ENCODE measurements at regions of chr17 and their contacts with region 1.

Region 1: DNA sequence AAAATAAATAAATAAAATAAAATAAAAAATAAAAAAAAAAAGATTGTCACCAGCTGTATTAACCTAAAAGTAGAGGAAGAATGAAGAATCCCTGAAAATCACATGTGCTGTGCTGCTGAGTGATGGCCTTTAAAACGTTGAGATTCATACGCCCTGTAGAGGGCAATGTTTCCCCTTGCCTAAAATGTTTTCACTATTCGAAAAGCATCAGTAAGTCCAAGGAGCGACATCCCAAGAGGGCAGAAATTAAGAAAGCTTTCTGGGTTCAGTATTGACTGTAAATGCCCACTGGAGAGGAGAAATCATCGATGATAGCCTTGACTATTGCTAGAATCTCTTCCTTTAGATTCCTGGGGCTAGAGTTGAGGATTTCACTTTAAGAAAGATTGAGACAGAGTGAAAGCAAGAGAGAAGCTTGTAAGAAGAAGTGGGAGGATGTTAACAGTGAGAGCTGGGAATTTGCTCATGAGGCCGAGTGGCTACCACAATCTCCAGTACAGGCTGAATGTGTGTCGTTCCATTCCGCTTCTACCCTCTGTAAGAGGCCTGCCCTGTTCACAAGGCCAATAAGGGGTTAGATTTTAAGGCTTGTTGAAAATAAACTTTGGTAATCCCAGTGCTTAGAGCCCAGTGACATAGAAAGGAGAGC is 170.8 kb upstream of the FAM20A start:
- DNase-seq: peak; percentile 80
- H3K4me3 ChIP-seq: peak overlapping the region; percentile 21
- H3K27ac ChIP-seq: no peak overlapping the region
- H3K4me1 ChIP-seq: peaks cover 22% of the 10 kb centered on the region
- CTCF ChIP-seq: peak; percentile 90

Region 2: GRCh38 chr17:68576811-68577496 is 195.0 kb before region 1 on chr17:
- CTCF ChIA-PET with region 1: no interaction called
- POLR2A ChIA-PET with region 1: no interaction called
- intact Hi-C with region 1: no loop called
- DNase-seq: peak; percentile 9
- H3K4me3 ChIP-seq: no peak overlapping the region
- H3K27ac ChIP-seq: no peak overlapping the region
- H3K4me1 ChIP-seq: no peaks in the 10 kb centered on the region
- CTCF ChIP-seq: peak; percentile 57

Region 3: DNA sequence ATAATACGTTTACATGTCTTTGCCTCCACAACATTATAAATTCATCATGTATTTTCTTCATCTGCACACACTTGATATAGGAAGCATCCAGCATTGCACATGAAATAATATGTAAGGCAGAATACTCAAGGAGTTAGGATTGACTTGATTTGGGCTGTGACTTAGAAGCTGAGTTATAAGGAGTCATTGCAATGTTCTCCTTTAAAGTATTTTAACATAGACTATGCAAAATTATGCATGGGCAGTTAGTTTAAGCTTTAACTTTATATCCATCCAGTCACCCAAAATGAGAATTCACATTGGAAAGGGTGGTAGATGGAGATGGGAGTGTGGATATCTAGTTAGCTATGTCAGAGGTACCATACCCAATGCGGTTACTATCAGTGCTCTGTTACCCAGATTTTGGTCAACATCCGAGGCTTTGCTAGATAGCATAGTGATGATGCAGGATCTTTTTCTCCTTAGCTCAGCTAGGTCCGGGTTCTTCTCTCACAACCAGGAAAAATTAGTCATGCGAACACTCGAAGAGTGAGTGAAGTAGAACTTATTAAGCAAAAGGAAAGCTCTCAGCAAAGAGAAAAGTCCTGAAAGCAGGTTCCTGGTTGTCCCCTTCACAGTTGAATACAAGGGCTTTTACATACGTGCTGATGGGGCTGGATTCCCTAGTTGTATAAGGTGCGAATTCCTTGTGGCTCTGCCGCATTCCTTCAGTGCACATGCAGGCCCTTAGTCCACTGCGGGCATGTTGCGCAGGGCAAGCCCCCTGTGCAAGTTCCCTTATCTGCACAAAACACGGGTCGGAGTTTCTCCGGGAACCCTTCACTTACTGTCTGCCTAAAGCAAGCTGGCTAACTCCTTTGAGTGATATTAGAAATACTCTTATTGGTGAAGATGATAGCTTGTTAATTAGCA is 97.7 kb before region 1 on chr17:
- CTCF ChIA-PET with region 1: no interaction called
- POLR2A ChIA-PET with region 1: no interaction called
- intact Hi-C with region 1: no loop called
- DNase-seq: no peak
- H3K4me3 ChIP-seq: no peak overlapping the region
- H3K27ac ChIP-seq: no peak overlapping the region
- H3K4me1 ChIP-seq: no peaks in the 10 kb centered on the region
- CTCF ChIP-seq: no peak

Region 4: DNA sequence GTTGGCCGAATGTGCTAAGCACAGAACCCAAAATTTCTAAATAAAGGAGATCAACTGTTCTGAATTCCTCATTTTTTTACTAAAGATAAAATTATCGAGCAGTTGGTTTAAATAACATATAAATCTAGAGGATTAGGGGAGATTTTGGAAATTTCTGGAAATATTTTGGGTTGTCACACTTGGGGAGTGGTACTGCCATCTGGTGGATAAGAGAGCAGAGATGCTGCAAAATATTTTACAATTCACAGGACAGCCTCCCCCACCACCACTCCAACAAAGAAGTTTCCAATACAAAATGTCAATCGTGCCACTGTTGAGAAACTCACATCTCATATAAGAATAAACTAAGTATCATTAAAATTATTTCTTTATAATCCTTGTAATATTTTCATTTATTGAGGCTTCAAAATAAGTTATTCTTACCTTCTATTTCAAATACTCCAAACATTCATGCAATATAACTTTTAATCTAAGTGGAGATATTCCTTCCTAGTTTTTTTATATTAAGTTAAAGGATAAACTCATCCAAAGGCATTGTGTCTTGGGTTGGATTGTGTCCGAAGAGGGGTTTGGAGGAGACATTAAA is 200.2 kb after region 1 on chr17:
- CTCF ChIA-PET with region 1: no interaction called
- POLR2A ChIA-PET with region 1: no interaction called
- intact Hi-C with region 1: loop called (anchors 2 kb)
- DNase-seq: peak; percentile 33
- H3K4me3 ChIP-seq: no peak overlapping the region
- H3K27ac ChIP-seq: no peak overlapping the region
- H3K4me1 ChIP-seq: no peaks in the 10 kb centered on the region
- CTCF ChIP-seq: peak; percentile 90

Region 5: DNA sequence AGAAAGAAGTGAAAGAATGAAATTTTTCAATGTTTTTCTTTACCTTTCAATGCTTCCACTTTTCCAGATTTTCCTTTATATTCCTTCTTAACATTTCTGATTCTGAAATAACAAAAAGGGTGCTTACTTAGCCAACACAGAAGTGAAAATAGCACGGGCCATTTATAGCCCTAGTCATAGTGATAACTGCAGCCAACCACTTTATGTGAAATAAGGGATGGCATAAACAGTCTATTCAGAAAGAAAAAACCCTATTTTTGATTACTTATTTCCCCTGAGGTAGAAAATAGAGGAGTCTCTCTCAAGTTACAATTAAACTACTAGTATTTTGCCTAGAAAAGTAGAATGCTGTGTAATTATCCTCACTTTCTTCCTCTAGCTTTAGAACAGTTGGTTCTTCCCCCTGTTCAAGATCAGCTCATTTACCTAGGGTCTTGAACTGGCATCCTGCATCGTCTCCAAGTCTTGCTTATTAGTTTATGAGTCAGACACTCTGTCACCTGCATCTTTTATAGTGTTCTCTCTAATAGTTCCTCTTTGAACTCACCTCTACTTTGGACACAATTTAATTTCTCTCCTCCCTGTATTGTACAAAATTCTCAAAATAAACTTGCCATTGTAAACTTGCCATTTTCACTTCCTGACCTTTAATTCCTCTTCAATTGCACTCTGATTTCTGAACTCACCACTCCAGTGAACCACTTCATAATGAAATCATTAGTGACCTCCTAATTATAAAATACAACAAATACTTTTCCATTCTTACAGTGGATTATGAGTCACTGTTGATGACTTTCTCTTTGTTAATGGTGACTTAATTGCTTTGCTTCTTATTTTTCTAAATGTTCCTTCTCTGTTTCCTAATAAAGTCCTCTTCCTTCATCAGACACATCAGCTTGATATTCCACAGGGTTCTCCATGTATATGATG is 346.1 kb after region 1 on chr17:
- CTCF ChIA-PET with region 1: no interaction called
- POLR2A ChIA-PET with region 1: no interaction called
- intact Hi-C with region 1: loop called (anchors 2 kb)
- DNase-seq: peak; percentile 85
- H3K4me3 ChIP-seq: peak overlapping the region; percentile 62
- H3K27ac ChIP-seq: peak overlapping the region; percentile 92
- H3K4me1 ChIP-seq: peaks cover 61% of the 10 kb centered on the region
- CTCF ChIP-seq: no peak

Region 6: DNA sequence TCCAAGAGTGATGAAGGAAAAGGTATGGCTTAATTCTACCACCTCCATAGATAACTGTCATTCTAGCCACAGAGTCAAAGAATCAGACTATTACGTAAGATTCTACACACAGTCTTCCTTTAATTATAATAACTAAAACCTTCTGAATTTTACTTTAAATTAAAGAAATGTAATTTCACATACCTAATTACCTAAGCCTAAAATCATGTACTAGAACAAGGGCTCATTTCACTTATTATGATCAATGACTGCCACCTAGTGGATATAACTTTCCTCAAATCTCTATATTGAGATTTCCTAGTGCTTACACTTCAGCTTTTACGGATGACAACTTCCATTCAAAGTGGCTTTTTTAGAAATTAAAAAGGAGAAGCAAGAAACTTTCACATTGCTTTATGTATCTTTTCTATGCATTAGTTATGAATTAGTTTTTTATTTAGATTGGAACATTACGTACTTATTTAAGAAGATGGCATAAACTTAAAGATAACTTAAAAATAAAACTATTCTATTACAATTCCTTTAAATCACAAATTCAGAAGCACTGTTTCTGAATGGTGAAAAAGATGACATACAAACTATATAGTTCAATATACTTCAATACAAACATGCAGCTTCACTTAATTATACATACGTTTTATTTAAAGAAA is 474.9 kb after region 1 on chr17:
- CTCF ChIA-PET with region 1: no interaction called
- POLR2A ChIA-PET with region 1: no interaction called
- intact Hi-C with region 1: loop called (anchors 1 kb)
- DNase-seq: peak; percentile 73
- H3K4me3 ChIP-seq: no peak overlapping the region
- H3K27ac ChIP-seq: no peak overlapping the region
- H3K4me1 ChIP-seq: no peaks in the 10 kb centered on the region
- CTCF ChIP-seq: peak; percentile 99